WTC11 (cell line): ENCODE measurements at regions of chr15 and their contacts with region 1.

Region 1: DNA sequence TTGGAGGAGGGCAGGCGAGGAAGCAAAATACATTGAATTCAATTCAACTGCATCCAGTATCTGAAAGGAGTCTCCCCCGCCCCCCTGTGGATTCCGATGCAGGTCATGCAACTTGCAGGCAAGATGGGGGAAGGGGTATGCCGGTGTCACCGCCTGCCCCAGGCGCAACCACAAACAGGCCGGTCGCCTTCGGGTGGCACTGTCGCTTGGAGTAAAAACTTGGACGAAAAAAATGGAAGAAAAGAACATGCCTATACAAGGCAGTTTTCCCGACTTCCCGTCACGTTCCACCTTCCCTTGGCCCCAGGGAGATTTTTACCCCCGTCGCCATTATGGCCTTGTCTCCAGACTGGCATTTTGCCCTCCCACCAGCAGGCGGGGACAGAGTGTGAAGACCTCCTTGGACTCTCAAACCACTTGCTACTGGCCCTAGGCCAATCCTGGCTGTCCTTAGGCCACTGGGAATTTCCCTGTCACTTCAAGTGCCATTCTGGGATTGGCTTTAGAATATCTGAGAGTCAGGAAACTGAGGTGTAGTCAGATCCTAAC is 1.6 kb upstream of the NTRK3 start:
- DNase-seq: peak; percentile 79
- ATAC-seq: peak; percentile 62
- H3K4me3 Mint-ChIP-seq: peak overlapping the region; percentile 98
- H3K27ac Mint-ChIP-seq: no peak overlapping the region; the same call in 1 of the 2 replicates
- H3K4me1 Mint-ChIP-seq: peaks cover 10% of the 10 kb centered on the region
- H3K27me3 Mint-ChIP-seq: peaks cover 59% of the 10 kb centered on the region
- CTCF ChIP-seq: peak; percentile 58; the same call in 1 of the 2 replicates

Region 2: DNA sequence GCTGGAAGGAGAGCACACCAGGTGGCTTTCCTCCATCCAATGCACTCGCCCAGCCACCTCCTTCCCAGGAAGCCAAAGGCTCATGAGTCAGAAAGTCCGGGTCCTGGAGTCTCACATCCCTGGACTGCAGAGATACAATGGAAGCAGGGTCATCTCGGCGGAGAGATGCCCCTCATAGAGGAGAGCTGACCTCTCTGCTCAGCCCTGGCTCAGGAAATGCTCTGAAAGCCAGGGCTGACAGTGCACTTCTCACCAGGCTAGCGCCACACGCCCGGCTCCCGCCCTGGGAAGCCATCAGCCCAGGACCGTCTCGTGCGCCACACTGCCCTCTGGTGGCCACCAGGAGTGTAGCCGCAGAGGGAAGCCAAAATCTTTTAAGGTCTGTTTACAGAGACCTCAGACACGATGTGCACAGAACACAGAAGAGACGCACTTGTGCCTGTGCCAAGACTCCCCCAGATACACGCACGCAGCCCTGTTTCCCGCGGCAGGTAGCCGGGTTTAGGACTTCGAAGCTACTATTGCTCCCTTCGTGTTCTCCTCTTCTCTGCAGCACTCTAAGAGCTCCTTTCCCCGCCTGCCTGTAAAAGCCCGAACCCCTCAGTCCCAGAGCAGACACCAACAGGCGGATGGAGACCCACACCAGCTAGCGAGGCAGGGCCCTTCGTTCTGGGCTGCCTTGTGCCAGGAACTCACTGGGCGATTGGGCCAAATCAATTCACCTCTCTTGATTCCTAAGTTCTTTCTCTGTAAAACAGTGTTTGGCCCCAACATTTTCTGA is 11.3 kb before region 1 on chr15:
- CTCF ChIA-PET with region 1: interaction called, 36 read pairs
- POLR2A ChIA-PET with region 1: no interaction called
- DNase-seq: peak; percentile 84
- ATAC-seq: peak; percentile 89
- H3K4me3 Mint-ChIP-seq: peak overlapping the region; percentile 52
- H3K27ac Mint-ChIP-seq: no peak overlapping the region
- H3K4me1 Mint-ChIP-seq: peaks cover 17% of the 10 kb centered on the region
- H3K27me3 Mint-ChIP-seq: peaks cover 3% of the 10 kb centered on the region; the same call in 1 of the 2 replicates
- CTCF ChIP-seq: peak; percentile 94

Region 3: GRCh38 chr15:88274553-88275460 is 16.6 kb after region 1 on chr15:
- CTCF ChIA-PET with region 1: interaction called, 71 read pairs
- POLR2A ChIA-PET with region 1: no interaction called
- DNase-seq: peak; percentile 87
- ATAC-seq: peak; percentile 94
- H3K4me3 Mint-ChIP-seq: no peak overlapping the region
- H3K27ac Mint-ChIP-seq: no peak overlapping the region
- H3K4me1 Mint-ChIP-seq: no peaks in the 10 kb centered on the region
- H3K27me3 Mint-ChIP-seq: peaks cover 10% of the 10 kb centered on the region
- CTCF ChIP-seq: peak; percentile 87

Region 4: GRCh38 chr15:88513195-88513594 is 255.0 kb after region 1 on chr15:
- CTCF ChIA-PET with region 1: no interaction called
- POLR2A ChIA-PET with region 1: interaction called, 11 read pairs
- DNase-seq: no peak
- ATAC-seq: no peak
- H3K4me3 Mint-ChIP-seq: no peak overlapping the region
- H3K27ac Mint-ChIP-seq: no peak overlapping the region
- H3K4me1 Mint-ChIP-seq: no peaks in the 10 kb centered on the region
- H3K27me3 Mint-ChIP-seq: peaks cover 4% of the 10 kb centered on the region; the same call in 1 of the 2 replicates
- CTCF ChIP-seq: no peak